ENCODE measurements at regions of chr12 and their contacts with region 1.

Region 1: GRCh38 chr12:96445691-96446583 is 43.4 kb upstream of the CFAP54 start:
- DNase-seq: peak; percentile 80
- H3K4me3 Mint-ChIP-seq: peak overlapping the region; percentile 28
- H3K27ac Mint-ChIP-seq: peak overlapping the region; percentile 95
- H3K4me1 Mint-ChIP-seq: peaks cover 53% of the 10 kb centered on the region
- H3K27me3 Mint-ChIP-seq: no peaks in the 10 kb centered on the region

Region 2: DNA sequence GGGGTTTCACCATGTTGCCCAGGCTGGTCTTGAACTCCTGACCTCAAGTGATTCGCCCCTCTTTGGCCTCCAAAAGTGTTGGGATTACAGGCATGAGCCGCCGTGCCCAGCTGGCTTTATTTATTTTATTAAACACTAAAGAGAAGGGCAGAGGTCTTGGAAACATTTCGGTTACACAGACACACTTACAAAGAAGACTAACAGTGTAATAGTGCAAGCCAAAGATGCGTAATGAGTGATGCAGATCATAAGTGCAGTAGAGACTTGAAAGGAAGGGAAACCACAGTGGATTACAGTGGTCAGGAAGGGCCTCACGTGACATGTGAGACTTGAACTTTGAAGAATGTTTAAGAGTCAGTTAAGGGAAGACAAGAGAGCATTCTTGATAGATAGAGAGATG is 11.8 kb before region 1 on chr12:
- CTCF ChIA-PET with region 1: interaction called, 27 read pairs
- POLR2A ChIA-PET with region 1: interaction called, 3 read pairs
- DNase-seq: peak; percentile 87
- H3K4me3 Mint-ChIP-seq: peak overlapping the region; percentile 3
- H3K27ac Mint-ChIP-seq: peak overlapping the region; percentile 83
- H3K4me1 Mint-ChIP-seq: peaks cover 44% of the 10 kb centered on the region
- H3K27me3 Mint-ChIP-seq: no peaks in the 10 kb centered on the region

Region 3: GRCh38 chr12:96466939-96467751 is 21.2 kb after region 1 on chr12:
- CTCF ChIA-PET with region 1: interaction called, 12 read pairs
- POLR2A ChIA-PET with region 1: no interaction called
- DNase-seq: no peak
- H3K4me3 Mint-ChIP-seq: no peak overlapping the region
- H3K27ac Mint-ChIP-seq: no peak overlapping the region
- H3K4me1 Mint-ChIP-seq: no peaks in the 10 kb centered on the region
- H3K27me3 Mint-ChIP-seq: no peaks in the 10 kb centered on the region

Region 4: GRCh38 chr12:96478011-96478410 is 32.1 kb after region 1 on chr12:
- CTCF ChIA-PET with region 1: no interaction called
- POLR2A ChIA-PET with region 1: no interaction called
- DNase-seq: no peak
- H3K4me3 Mint-ChIP-seq: no peak overlapping the region
- H3K27ac Mint-ChIP-seq: no peak overlapping the region
- H3K4me1 Mint-ChIP-seq: peaks cover 5% of the 10 kb centered on the region
- H3K27me3 Mint-ChIP-seq: no peaks in the 10 kb centered on the region